MCF 10A (cell line): ENCODE measurements at regions of chr1 and their contacts with region 1.

Region 1: GRCh38 chr1:218345673-218346390 is 696 bp downstream of the TGFB2 start:
- DNase-seq: peak; percentile 81
- H3K4me3 Mint-ChIP-seq: no peak overlapping the region
- H3K27ac Mint-ChIP-seq: no peak overlapping the region
- H3K4me1 Mint-ChIP-seq: peaks cover 41% of the 10 kb centered on the region
- H3K27me3 Mint-ChIP-seq: no peaks in the 10 kb centered on the region
- CTCF ChIP-seq: no peak

Region 2: DNA sequence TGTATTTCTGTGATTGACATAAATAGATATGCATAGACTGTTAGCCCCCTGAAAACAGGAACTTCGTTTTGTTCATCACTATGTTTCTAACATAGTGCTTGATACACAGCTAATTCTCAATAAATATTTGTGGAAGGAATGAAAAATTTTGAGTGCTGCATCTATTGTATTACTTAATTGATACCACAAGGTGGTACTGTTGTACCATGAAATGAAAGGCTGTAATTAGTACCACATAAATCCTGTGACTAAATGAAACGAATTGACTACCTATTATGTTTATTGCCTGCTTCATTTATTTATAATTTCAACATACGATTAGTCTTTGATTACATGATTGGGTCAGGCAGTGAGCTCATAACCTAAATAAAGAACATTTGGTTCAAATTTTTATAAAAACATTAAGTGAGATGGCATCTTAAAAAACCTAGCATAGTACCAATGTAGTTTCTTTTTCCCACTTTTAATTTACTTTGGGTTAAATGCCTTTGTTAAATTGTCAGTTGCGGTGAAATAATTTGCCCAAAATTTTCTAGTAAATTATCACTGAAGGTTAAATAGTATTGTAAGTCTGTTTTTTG is 15.7 kb before region 1 on chr1:
- CTCF ChIA-PET with region 1: interaction called, 25 read pairs
- POLR2A ChIA-PET with region 1: no interaction called
- intact Hi-C with region 1: no loop called
- DNase-seq: peak; percentile 67
- H3K4me3 Mint-ChIP-seq: no peak overlapping the region
- H3K27ac Mint-ChIP-seq: peak overlapping the region; percentile 55
- H3K4me1 Mint-ChIP-seq: no peaks in the 10 kb centered on the region
- H3K27me3 Mint-ChIP-seq: no peaks in the 10 kb centered on the region
- CTCF ChIP-seq: peak; percentile 84

Region 3: GRCh38 chr1:218459878-218460711 is 114.3 kb after region 1 on chr1:
- CTCF ChIA-PET with region 1: interaction called, 3 read pairs
- POLR2A ChIA-PET with region 1: interaction called, 13 read pairs
- intact Hi-C with region 1: loop called (anchors 2 kb)
- DNase-seq: peak; percentile 99
- H3K4me3 Mint-ChIP-seq: peak overlapping the region; percentile 34
- H3K27ac Mint-ChIP-seq: peak overlapping the region; percentile 85
- H3K4me1 Mint-ChIP-seq: peaks cover 38% of the 10 kb centered on the region
- H3K27me3 Mint-ChIP-seq: no peaks in the 10 kb centered on the region
- CTCF ChIP-seq: no peak

Region 4: GRCh38 chr1:218499011-218499691 is 153.3 kb after region 1 on chr1:
- CTCF ChIA-PET with region 1: interaction called, 3 read pairs
- POLR2A ChIA-PET with region 1: interaction called, 37 read pairs
- intact Hi-C with region 1: loop called (anchors 2 kb)
- DNase-seq: peak; percentile 63
- H3K4me3 Mint-ChIP-seq: peak overlapping the region; percentile 59
- H3K27ac Mint-ChIP-seq: peak overlapping the region; percentile 93
- H3K4me1 Mint-ChIP-seq: peaks cover 35% of the 10 kb centered on the region
- H3K27me3 Mint-ChIP-seq: no peaks in the 10 kb centered on the region
- CTCF ChIP-seq: no peak

Region 5: GRCh38 chr1:218585511-218586184 is 239.8 kb after region 1 on chr1:
- CTCF ChIA-PET with region 1: interaction called, 3 read pairs
- POLR2A ChIA-PET with region 1: interaction called, 4 read pairs
- intact Hi-C with region 1: loop called (anchors 2 kb)
- DNase-seq: peak; percentile 95
- H3K4me3 Mint-ChIP-seq: no peak overlapping the region
- H3K27ac Mint-ChIP-seq: peak overlapping the region; percentile 81
- H3K4me1 Mint-ChIP-seq: peaks cover 26% of the 10 kb centered on the region
- H3K27me3 Mint-ChIP-seq: no peaks in the 10 kb centered on the region
- CTCF ChIP-seq: no peak

Region 6: DNA sequence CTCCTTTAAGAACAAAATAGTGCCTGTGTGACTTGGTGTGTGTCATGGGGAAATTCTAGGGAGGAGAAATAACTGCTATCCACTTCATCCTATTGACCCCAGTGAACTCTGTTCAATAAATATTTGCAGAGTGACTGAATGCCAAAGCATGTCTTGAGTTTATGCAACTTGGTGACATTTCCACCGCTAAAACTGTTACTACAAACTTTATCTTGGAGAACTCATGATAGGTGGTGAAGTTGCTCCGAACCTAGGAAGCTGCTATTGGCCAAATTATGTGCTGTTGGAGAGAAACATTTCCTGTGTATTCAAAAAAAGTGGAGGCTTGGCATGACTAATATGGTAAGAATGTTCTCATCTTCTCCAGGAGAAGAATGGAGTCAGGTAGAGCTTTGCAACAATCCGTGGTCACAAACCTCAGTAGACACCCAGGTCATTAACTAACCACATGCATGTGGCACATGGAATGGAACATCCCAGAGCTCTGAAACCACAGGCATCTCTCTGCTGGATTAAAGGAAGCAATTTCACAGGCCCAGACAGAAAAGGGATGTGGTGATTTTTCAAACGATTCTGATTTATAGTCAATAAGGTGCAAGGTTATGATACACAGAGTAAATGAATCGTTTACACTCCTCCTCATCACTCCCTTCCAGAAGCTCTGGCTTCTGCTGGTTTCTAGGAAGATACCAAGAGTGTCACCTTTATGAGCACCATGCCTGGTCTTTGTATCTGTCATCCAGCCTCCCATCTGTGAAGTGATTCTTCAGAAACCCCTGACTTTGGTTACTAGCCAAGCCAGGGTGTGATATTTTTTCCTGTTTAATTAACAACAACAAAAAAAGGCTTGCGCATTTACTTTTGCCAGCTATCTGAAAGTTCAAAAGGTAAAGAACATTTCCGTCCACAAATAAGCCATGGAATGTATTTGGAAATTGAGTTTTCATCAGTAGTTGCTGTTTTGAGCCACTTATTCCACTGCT is 360.4 kb after region 1 on chr1:
- CTCF ChIA-PET with region 1: interaction called, 3 read pairs
- POLR2A ChIA-PET with region 1: interaction called, 3 read pairs
- intact Hi-C with region 1: loop called (anchors 1 kb)
- DNase-seq: peak; percentile 98
- H3K4me3 Mint-ChIP-seq: peak overlapping the region; percentile 24
- H3K27ac Mint-ChIP-seq: peak overlapping the region; percentile 46
- H3K4me1 Mint-ChIP-seq: peaks cover 59% of the 10 kb centered on the region
- H3K27me3 Mint-ChIP-seq: no peaks in the 10 kb centered on the region
- CTCF ChIP-seq: no peak

Region 7: GRCh38 chr1:219173758-219174588 is 828.1 kb after region 1 on chr1 and contains the start of gene LYPLAL1:
- CTCF ChIA-PET with region 1: no interaction called
- POLR2A ChIA-PET with region 1: interaction called, 4 read pairs
- intact Hi-C with region 1: loop called (anchors 10 kb)
- DNase-seq: peak; percentile 93
- H3K4me3 Mint-ChIP-seq: peak within 1 kb of the TSS; percentile 93
- H3K27ac Mint-ChIP-seq: peak within 1 kb of the TSS; percentile 84
- H3K4me1 Mint-ChIP-seq: peaks cover 37% of the 10 kb centered on the region
- H3K27me3 Mint-ChIP-seq: no peaks in the 10 kb centered on the region
- CTCF ChIP-seq: no peak
- total RNA-seq, gene LYPLAL1: 59.8 and 69.0 TPM in 2 replicates